ENCODE measurements at regions of chr2 and their contacts with region 1.

Region 1: GRCh38 chr2:178914259-178914849 is 107.1 kb upstream of the TTN start:
- DNase-seq: peak; percentile 69
- H3K4me3 ChIP-seq: no peak overlapping the region
- H3K27ac ChIP-seq: no peak overlapping the region
- H3K4me1 ChIP-seq: no peaks in the 10 kb centered on the region
- CTCF ChIP-seq: peak; percentile 94

Region 2: GRCh38 chr2:178761759-178762371 is 152.5 kb before region 1 on chr2:
- CTCF ChIA-PET with region 1: no interaction called
- POLR2A ChIA-PET with region 1: no interaction called
- intact Hi-C with region 1: loop called (anchors 5 kb)
- DNase-seq: peak; percentile 67
- H3K4me3 ChIP-seq: no peak overlapping the region
- H3K27ac ChIP-seq: no peak overlapping the region
- H3K4me1 ChIP-seq: no peaks in the 10 kb centered on the region
- CTCF ChIP-seq: peak; percentile 94

Region 3: GRCh38 chr2:178796079-178796677 is 118.2 kb before region 1 on chr2:
- CTCF ChIA-PET with region 1: no interaction called
- POLR2A ChIA-PET with region 1: no interaction called
- intact Hi-C with region 1: loop called (anchors 2 kb)
- DNase-seq: peak; percentile 41
- H3K4me3 ChIP-seq: no peak overlapping the region
- H3K27ac ChIP-seq: no peak overlapping the region
- H3K4me1 ChIP-seq: no peaks in the 10 kb centered on the region
- CTCF ChIP-seq: peak; percentile 86

Region 4: DNA sequence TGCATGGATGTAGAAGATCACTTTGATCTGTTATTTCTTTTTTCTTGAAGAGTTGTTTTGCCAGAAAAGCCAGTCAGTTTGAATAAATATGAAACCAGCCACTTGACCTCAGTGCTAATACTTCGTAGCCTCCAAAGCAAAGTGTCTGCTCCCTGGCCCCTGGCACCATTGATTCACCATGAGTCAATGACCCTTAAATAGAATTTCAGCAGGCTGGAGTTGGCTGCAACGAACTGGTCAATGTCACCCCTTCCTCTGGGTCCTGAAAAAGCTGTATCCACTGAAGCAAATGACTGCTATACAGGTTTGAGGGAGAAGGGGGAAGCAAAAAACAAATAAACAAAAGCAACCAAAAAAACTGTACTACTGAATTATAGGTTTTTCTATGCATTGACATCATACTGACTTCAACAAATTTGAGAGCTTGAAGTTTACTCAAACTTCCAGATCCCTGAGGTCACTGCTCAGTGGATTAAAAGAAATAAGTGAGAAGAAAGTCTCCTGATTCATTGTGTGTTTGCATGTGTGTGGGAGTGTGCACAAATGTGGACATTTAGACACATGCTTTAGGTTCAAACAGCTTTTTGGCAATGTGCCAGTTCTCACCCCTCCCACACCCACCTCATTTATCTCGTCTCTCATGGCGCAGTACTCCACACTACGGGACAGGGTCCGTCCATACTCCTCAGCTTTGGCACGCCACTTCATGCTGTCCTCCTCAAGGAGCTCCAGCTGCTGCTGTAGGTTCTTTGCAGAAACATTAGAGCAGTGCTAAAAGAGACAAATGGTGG is 49.0 kb before region 1 on chr2:
- CTCF ChIA-PET with region 1: no interaction called
- POLR2A ChIA-PET with region 1: no interaction called
- intact Hi-C with region 1: no loop called
- DNase-seq: no peak
- H3K4me3 ChIP-seq: no peak overlapping the region
- H3K27ac ChIP-seq: no peak overlapping the region
- H3K4me1 ChIP-seq: no peaks in the 10 kb centered on the region
- CTCF ChIP-seq: no peak

Region 5: GRCh38 chr2:178943745-178944144 is 29.4 kb after region 1 on chr2:
- CTCF ChIA-PET with region 1: no interaction called
- POLR2A ChIA-PET with region 1: no interaction called
- intact Hi-C with region 1: no loop called
- DNase-seq: no peak
- H3K4me3 ChIP-seq: no peak overlapping the region
- H3K27ac ChIP-seq: no peak overlapping the region
- H3K4me1 ChIP-seq: no peaks in the 10 kb centered on the region
- CTCF ChIP-seq: no peak

Measured in OCI-LY7 (cell line).